Mammary epithelial cell (primary cell): ENCODE measurements at regions of chr3 and their contacts with region 1.

Region 1: GRCh38 chr3:21752749-21753347 is 1.8 kb upstream of the ZNF385D start:
- DNase-seq: peak; percentile 63
- H3K4me3 ChIP-seq: no peak overlapping the region
- H3K27ac ChIP-seq: no peak overlapping the region
- H3K4me1 ChIP-seq: peaks cover 8% of the 10 kb centered on the region
- H3K27me3 ChIP-seq: no peaks in the 10 kb centered on the region
- CTCF ChIP-seq: peak; percentile 65 to 75

Region 2: DNA sequence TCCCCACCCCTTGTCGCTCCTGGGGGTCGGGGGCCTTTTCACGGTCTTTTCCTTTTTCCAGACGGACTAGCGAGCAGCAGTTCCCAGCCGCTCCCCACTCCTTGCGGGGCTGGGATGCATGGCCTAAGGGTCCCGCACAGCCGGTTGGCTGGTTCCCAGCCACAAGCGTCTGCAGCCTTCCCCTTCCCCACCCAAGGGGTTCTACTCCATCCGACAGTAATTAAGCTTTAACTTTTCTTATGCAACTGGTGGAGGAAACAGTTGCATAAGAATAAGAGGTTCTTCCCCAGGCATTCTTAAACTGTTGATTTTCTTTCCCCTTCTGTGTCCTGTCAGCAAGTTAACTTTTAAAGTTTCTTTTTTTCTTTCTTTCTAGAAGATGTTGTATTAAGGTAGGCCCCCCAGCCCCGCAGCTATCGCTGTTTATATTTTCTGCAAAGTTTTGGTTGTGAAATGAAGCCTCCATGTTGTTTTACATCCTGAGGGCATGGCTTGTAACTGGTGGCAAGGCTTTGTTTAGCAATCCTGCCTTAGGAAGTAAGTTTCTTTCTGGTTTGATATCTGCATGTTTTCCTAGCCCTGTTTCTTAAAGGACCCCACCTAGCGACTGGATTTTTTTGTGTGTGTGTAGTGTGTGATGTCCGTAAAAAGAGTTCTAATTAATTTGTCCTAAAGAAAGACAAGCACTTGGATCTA is 209.3 kb before region 1 on chr3:
- CTCF ChIA-PET with region 1: no interaction called
- dilution Hi-C with region 1: no loop called
- in situ Hi-C with region 1: no loop called
- intact Hi-C with region 1: loop called (anchors 10 kb)
- DNase-seq: no peak
- H3K4me3 ChIP-seq: no peak overlapping the region
- H3K27ac ChIP-seq: no peak overlapping the region
- H3K4me1 ChIP-seq: no peaks in the 10 kb centered on the region
- H3K27me3 ChIP-seq: no peaks in the 10 kb centered on the region
- CTCF ChIP-seq: no peak

Region 3: GRCh38 chr3:21705769-21706168 is 47.1 kb before region 1 on chr3:
- CTCF ChIA-PET with region 1: interaction called, 12 read pairs
- dilution Hi-C with region 1: no loop called
- in situ Hi-C with region 1: no loop called
- intact Hi-C with region 1: no loop called
- DNase-seq: peak; percentile 90
- H3K4me3 ChIP-seq: no peak overlapping the region
- H3K27ac ChIP-seq: peak overlapping the region; percentile 52
- H3K4me1 ChIP-seq: peaks cover 17% of the 10 kb centered on the region
- H3K27me3 ChIP-seq: no peaks in the 10 kb centered on the region
- CTCF ChIP-seq: no peak

Region 4: DNA sequence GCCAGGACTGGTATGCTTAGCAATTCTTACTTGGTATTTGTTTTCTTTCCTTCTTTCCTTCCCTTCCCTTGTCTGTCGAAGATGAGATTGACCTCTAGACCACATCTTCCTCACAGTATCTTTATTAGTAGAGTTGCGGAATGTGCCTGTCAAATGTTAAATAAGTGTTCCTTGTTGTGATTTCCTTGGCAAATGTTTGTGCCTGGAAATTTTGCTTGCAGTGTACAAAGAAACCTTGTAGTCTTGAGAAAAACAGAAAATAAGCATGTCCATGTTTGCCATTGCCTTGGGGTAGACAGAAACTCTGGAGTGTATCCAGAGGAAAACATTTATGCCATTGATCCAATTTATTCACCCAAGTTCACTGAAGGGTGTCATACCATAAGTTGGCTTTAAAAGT is 77.7 kb after region 1 on chr3:
- CTCF ChIA-PET with region 1: no interaction called
- dilution Hi-C with region 1: loop called (anchors 5 kb)
- in situ Hi-C with region 1: no loop called
- intact Hi-C with region 1: no loop called
- DNase-seq: no peak
- H3K4me3 ChIP-seq: no peak overlapping the region
- H3K27ac ChIP-seq: no peak overlapping the region
- H3K4me1 ChIP-seq: no peaks in the 10 kb centered on the region
- H3K27me3 ChIP-seq: no peaks in the 10 kb centered on the region
- CTCF ChIP-seq: no peak

Region 5: GRCh38 chr3:22117751-22118346 is 365.0 kb after region 1 on chr3:
- CTCF ChIA-PET with region 1: no interaction called
- dilution Hi-C with region 1: no loop called
- in situ Hi-C with region 1: no loop called
- intact Hi-C with region 1: loop called (anchors 5 kb)
- DNase-seq: peak; percentile 9
- H3K4me3 ChIP-seq: no peak overlapping the region
- H3K27ac ChIP-seq: no peak overlapping the region
- H3K4me1 ChIP-seq: no peaks in the 10 kb centered on the region
- H3K27me3 ChIP-seq: no peaks in the 10 kb centered on the region
- CTCF ChIP-seq: peak; percentile 58